ENCODE measurements at regions of chr14 and their contacts with region 1.

Region 1: GRCh38 chr14:54730156-54730961 is 163.4 kb downstream of the SAMD4A start:
- DNase-seq: peak; percentile 61
- ATAC-seq: peak; percentile 93
- H3K4me3 Mint-ChIP-seq: peak overlapping the region; percentile 58
- H3K27ac Mint-ChIP-seq: peak overlapping the region; percentile 94
- H3K4me1 Mint-ChIP-seq: peaks cover 40% of the 10 kb centered on the region
- H3K27me3 Mint-ChIP-seq: peaks cover 18% of the 10 kb centered on the region

Region 2: DNA sequence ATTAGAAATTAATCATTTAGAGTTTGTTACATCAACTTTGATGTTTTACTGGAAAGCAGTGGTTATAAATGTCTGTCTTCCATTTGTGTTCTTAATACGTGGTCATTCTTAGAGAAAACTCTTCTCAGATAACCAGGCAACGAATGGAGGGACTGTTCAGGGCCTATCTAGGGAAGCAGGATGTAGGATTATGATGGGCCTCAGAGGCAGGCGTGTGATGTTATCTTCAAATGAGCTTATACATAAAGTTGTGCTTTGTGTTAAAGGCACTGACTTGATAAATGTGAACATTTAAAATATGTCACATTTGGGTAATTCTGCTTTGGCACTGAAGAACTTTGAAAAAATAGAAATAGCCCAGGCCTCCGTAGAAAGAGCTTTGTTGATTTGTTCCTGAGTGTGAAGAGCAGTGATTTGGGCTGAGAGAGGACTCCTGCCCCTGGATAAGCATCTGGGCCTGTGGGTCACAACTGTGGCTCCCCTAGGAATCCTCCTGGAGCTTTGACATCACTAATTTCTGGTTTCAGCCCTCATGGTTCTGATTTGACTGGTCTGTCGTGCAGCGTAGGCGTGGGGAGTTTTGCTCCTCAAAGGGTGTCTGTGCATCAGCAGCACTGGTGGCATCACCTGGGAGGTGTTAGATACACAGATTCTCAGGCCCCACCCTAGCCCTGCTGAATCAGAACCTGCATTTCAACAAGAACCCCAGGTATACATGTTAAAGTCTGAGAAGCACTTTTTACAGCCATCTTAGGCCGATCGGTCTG is 108.0 kb before region 1 on chr14:
- CTCF ChIA-PET with region 1: interaction called, 4 read pairs
- POLR2A ChIA-PET with region 1: no interaction called
- intact Hi-C with region 1: loop called (anchors 1 to 5 kb)
- DNase-seq: peak; percentile 87
- ATAC-seq: peak; percentile 96
- H3K4me3 Mint-ChIP-seq: no peak overlapping the region
- H3K27ac Mint-ChIP-seq: no peak overlapping the region
- H3K4me1 Mint-ChIP-seq: peaks cover 30% of the 10 kb centered on the region
- H3K27me3 Mint-ChIP-seq: no peaks in the 10 kb centered on the region

Region 3: DNA sequence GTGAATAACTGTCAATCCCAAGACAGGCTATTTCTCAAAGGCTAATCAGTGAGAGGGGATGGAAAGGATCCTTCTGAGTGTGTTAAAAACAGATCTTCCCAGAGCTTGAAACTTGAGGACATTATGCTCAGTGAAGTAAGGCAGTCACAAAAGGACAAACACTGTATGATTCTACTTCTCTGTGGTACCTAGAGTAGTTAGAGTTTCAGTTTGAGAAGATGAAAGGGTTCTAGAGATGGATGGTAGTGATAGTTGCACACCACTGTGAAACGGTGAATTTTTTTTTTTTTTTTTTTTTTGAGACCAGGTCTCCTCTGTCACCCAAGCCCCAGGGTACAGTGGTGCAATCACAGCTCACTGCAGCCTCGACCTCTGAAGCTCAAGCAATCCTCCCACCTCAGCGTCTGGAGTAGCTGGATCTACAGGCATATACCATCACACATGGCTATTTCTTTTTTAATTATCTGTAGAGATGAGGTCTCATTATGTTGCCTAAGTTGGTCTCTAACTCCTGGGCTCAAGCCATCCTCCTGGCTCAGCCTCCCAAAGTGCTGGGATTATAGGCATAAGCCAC is 29.6 kb before region 1 on chr14:
- CTCF ChIA-PET with region 1: interaction called, 9 read pairs
- POLR2A ChIA-PET with region 1: interaction called, 11 read pairs
- intact Hi-C with region 1: no loop called
- DNase-seq: no peak
- ATAC-seq: peak; percentile 99
- H3K4me3 Mint-ChIP-seq: no peak overlapping the region
- H3K27ac Mint-ChIP-seq: no peak overlapping the region
- H3K4me1 Mint-ChIP-seq: peaks cover 6% of the 10 kb centered on the region
- H3K27me3 Mint-ChIP-seq: peaks cover 12% of the 10 kb centered on the region